ENCODE measurements at regions of chr1 and their contacts with region 1.

Region 1: GRCh38 chr1:41862384-41863174 is 56.1 kb downstream of the HIVEP3 start:
- DNase-seq: peak; percentile 85
- H3K4me3 Mint-ChIP-seq: peak overlapping the region; percentile 53
- H3K27ac Mint-ChIP-seq: peak overlapping the region; percentile 91
- H3K4me1 Mint-ChIP-seq: peaks cover 42% of the 10 kb centered on the region
- H3K27me3 Mint-ChIP-seq: no peaks in the 10 kb centered on the region

Region 2: GRCh38 chr1:41739061-41739955 is 123.3 kb before region 1 on chr1:
- intact Hi-C with region 1: loop called (anchors 2 kb)
- DNase-seq: peak; percentile 92
- H3K4me3 Mint-ChIP-seq: peak overlapping the region; percentile 61
- H3K27ac Mint-ChIP-seq: peak overlapping the region; percentile 94
- H3K4me1 Mint-ChIP-seq: peaks cover 87% of the 10 kb centered on the region
- H3K27me3 Mint-ChIP-seq: no peaks in the 10 kb centered on the region

Region 3: DNA sequence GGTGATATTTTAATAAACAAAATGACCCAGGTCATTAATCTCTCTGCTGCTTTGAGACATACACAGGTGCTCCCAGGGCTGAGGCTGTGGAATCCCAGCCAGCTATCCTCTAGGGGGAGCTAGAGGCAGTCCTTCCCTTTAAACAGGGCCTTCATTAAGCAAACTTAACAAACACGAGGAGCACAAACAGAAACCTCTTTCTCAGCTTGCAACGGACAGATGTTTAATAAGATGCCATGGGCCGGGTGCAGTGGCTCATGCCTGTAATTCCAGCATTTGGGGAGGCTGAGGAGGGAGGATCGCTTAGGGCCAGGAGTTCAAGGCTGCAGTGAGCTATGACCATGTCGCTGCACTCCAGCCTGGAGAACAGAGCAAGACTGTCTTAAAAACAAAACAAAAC is 50.5 kb before region 1 on chr1:
- intact Hi-C with region 1: loop called (anchors 1 kb)
- DNase-seq: peak; percentile 89
- H3K4me3 Mint-ChIP-seq: no peak overlapping the region
- H3K27ac Mint-ChIP-seq: peak overlapping the region; percentile 34
- H3K4me1 Mint-ChIP-seq: peaks cover 54% of the 10 kb centered on the region
- H3K27me3 Mint-ChIP-seq: no peaks in the 10 kb centered on the region

Region 4: DNA sequence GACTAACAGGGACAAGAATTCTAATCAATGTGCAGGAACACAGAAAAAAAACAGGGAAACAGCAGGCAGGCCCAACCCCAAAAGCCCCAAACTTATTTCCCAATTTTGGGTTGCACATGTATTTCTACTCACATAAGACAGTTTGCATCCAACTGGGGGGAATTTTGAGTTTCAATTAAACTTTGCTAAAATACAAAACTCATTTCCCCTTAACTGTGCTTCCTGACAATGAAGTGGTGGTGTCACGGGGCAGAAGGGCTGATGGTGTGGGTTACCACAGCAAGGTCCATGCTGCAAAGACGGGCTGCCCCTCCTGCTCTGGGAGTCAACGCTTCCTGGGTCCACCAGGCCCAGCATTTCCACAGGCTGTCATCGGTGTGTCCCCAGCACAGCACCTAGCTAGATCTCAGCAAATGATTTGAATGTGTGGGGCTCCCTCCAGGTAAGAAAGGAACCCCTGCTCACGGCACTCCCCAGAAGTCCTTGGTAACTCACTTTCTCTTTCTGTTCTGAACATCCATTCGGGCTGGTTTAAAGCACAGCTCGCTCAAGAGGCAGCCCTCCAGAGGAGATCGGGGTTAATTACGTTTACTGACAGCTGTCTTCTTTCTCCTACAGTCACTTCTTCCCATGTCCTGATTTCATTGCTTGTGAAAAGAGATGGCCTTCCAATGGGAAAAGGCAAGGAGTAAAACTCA is 28.8 kb after region 1 on chr1:
- intact Hi-C with region 1: loop called (anchors 2 kb)
- DNase-seq: peak; percentile 91
- H3K4me3 Mint-ChIP-seq: peak overlapping the region; percentile 84
- H3K27ac Mint-ChIP-seq: peak overlapping the region; percentile 94
- H3K4me1 Mint-ChIP-seq: peaks cover 60% of the 10 kb centered on the region
- H3K27me3 Mint-ChIP-seq: no peaks in the 10 kb centered on the region